K562 (cell line): ENCODE measurements at regions of chr1 and their contacts with region 1.

Region 1: DNA sequence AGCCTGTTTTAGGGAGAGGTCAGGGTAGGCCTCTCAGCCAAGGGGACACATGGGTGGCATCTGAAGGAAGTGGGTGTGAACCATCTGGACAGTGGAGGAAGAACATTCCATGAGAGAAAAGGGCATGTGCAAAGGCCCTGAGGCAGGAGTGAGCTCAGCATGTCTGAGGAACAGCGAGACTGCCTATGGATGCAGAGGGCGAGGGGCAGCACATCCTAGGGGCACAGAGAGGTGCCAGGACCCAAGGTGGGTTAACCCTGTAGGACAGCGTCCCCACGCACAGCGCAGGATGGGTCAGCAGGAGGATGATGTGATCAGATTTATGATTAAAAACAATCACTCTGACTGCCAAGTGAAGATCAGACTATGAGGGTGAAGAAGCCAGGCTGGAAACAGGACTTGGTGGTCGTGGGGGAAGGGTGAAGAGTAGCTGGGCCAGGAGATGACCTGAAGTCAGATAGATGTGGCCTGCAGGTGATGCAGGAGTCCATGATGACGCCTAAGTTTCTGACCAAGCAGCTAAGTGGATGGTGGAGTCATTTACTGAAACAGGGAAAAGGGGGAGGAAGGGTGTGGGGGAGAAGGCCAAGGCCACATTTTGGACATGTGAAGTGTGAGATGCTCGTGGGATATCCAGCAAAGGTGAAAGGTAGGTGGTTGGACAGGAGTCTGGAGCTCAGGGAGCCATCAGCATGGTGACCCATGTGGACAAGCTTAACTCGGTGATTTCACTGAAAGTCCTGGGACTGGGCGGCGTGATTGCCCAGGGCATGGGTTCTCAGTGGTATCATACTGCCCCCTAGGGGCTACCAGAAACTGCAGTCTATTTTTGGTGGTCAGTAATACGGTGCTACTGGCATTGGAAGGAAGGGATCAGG is 37.8 kb downstream of the PABPC4 start:
- DNase-seq: peak; percentile 82 to 89 (median 88)
- ATAC-seq: peak; percentile 99
- H3K4me3 ChIP-seq: no peak overlapping the region
- H3K27ac ChIP-seq: no peak overlapping the region
- H3K4me1 ChIP-seq: no peaks in the 10 kb centered on the region
- H3K27me3 ChIP-seq: no peaks in the 10 kb centered on the region
- CTCF ChIP-seq: peak; percentile 92 to 98 (median 97)
- EP300 ChIP-seq: no peak
- POLR2A ChIP-seq: no peak
- RAD21 ChIP-seq: peak; percentile 81 to 93

Region 2: GRCh38 chr1:39189592-39190041 is 349.2 kb before region 1 on chr1:
- CTCF ChIA-PET with region 1: interaction called, 3 read pairs
- POLR2A ChIA-PET with region 1: no interaction called
- in situ Hi-C with region 1: no loop called
- intact Hi-C with region 1: loop called (anchors 5 kb)
- DNase-seq: peak in 1 of 4 experiments; percentile 22
- ATAC-seq: no peak
- H3K4me3 ChIP-seq: no peak overlapping the region
- H3K27ac ChIP-seq: peak overlapping the region; percentile 56; the same call in 2 of the 3 replicates
- H3K4me1 ChIP-seq: peaks cover 21 to 33% of the 10 kb centered on the region in 2 experiments
- H3K27me3 ChIP-seq: no peaks in the 10 kb centered on the region
- CTCF ChIP-seq: no peak
- EP300 ChIP-seq: peak; percentile 41; the same call in 1 of the 2 replicates
- POLR2A ChIP-seq: no peak
- RAD21 ChIP-seq: peak in 1 of 2 experiments; percentile 21; a peak in 1 of 4 replicates

Region 3: GRCh38 chr1:39268112-39268581 is 270.7 kb before region 1 on chr1:
- CTCF ChIA-PET with region 1: interaction called, 6 read pairs
- POLR2A ChIA-PET with region 1: interaction called, 3 read pairs
- in situ Hi-C with region 1: loop called (anchors 10 kb)
- intact Hi-C with region 1: loop called (anchors 2 kb)
- DNase-seq: no peak
- ATAC-seq: no peak
- H3K4me3 ChIP-seq: no peak overlapping the region
- H3K27ac ChIP-seq: no peak overlapping the region
- H3K4me1 ChIP-seq: peaks cover 15 to 34% of the 10 kb centered on the region in 2 experiments
- H3K27me3 ChIP-seq: no peaks in the 10 kb centered on the region
- CTCF ChIP-seq: no peak
- EP300 ChIP-seq: no peak
- POLR2A ChIP-seq: no peak
- RAD21 ChIP-seq: no peak

Region 4: DNA sequence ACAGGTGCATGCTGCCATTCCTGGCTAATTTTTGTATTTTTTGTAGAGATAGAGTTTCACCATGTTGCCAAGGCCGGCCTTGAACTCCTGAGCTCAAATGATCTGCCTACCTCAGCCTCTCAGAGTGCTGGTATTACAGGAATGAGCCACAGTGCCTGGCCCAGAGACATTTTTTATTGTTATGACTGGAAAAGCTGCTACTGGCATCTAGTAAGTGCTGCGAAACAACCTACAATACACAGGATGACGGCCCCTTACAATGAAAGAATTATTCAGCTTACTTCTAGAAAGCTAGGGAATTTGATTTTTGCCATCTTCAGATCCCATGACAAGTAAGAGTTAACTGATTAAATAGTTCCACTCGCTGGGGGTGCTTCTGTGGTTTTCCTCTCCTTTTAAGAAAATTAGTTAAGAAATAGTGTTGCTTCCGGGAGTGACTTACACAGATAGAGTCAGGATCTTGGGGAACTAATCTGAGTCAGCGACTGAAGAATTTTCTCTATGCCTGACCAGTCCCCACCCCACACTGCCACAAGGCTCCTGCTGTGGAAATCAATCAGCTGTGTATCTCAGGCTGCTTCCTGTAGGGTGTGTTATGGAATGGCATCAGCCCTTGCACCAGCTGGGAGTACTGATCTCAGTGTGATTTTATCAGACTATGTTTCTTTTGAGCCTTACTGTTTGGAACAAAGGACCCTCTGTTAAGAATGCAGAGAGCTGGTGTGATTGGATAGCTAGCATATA is 140.4 kb before region 1 on chr1:
- CTCF ChIA-PET with region 1: no interaction called
- POLR2A ChIA-PET with region 1: no interaction called
- in situ Hi-C with region 1: no loop called
- intact Hi-C with region 1: no loop called
- DNase-seq: peak; percentile 70 to 85 (median 76)
- ATAC-seq: peak; percentile 90
- H3K4me3 ChIP-seq: no peak overlapping the region
- H3K27ac ChIP-seq: peak overlapping the region; percentile 70; the same call in 2 of the 3 replicates
- H3K4me1 ChIP-seq: peaks cover 19 to 54% of the 10 kb centered on the region in 2 experiments
- H3K27me3 ChIP-seq: no peaks in the 10 kb centered on the region
- CTCF ChIP-seq: peak in 1 of 3 experiments; percentile 15; a peak in 1 of 6 replicates
- EP300 ChIP-seq: peak; percentile 84
- POLR2A ChIP-seq: no peak
- RAD21 ChIP-seq: no peak; a peak in 2 of 4 replicates

Region 5: DNA sequence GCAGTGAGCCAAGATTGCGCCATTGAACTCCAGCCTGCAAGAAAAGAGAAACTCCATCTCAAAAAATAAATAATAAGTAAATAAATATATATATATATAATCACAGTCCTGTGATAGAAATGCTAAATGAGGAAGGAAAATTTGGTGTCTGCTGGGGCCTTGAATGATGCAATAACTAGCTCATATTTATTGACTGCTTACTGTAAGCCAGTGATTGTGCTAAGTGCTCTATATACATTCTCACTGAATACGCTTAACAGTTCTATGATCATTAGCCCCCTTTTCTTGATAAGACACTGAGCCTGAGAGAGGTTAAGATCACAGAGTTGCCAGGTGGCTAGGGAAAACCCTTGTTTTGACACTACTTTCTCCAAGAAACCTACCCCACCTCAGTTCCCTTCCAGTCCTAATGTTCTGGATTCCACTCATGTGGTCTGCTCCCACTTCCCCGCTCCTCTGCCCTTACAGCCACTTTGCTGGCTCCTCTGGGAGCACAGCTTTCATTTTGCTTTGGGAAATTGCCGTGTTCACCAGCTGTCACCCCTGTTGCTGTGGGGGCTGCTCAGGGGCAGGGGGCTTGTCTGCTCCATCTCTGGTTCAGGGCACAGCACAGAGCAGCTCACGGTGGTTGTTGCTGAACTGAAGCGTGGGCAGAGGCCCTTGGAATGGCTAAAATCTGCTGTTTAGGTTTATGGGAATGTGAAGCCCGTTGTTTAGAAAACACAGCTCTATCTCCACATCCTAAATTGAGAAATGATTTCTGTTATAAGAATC is 49.8 kb before region 1 on chr1:
- CTCF ChIA-PET with region 1: no interaction called
- POLR2A ChIA-PET with region 1: no interaction called
- in situ Hi-C with region 1: loop called (anchors 5 kb)
- intact Hi-C with region 1: no loop called
- DNase-seq: no peak
- ATAC-seq: no peak
- H3K4me3 ChIP-seq: no peak overlapping the region
- H3K27ac ChIP-seq: no peak overlapping the region
- H3K4me1 ChIP-seq: peaks cover 0 to 24% of the 10 kb centered on the region in 2 experiments; a peak in 2 of 5 replicates
- H3K27me3 ChIP-seq: peaks cover 4 to 17% of the 10 kb centered on the region in 2 experiments
- CTCF ChIP-seq: no peak
- EP300 ChIP-seq: no peak
- POLR2A ChIP-seq: no peak
- RAD21 ChIP-seq: no peak

Region 6: DNA sequence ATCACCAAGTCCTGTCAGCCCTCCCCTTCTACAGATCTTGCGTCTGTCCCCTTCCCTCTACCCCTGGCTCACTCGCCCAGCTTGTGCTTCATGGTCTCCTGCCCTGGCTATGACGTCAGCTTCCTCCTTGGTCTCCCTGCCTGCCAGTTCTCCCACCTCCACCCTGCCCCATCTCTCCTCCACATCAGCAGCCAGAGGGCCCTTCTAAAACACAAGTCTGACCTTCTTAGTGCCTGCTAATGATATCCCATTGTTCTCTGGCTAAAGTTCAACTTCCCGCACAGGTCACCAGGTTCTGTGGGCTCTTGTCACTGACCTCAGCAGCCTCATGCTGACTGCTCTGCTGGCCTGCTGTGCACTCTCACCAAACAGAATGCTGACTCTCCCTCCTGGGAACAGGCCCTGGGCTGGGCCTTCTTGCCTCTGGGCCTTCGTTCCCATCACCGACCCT is 387.5 kb after region 1 on chr1:
- CTCF ChIA-PET with region 1: no interaction called
- POLR2A ChIA-PET with region 1: no interaction called
- in situ Hi-C with region 1: no loop called
- intact Hi-C with region 1: no loop called
- DNase-seq: peak in 1 of 4 experiments; percentile 38
- ATAC-seq: peak; percentile 54
- H3K4me3 ChIP-seq: no peak overlapping the region
- H3K27ac ChIP-seq: no peak overlapping the region
- H3K4me1 ChIP-seq: peaks cover 0 to 5% of the 10 kb centered on the region in 2 experiments; a peak in 2 of 5 replicates
- H3K27me3 ChIP-seq: peaks cover 21 to 61% of the 10 kb centered on the region in 2 experiments; a peak in 4 of 5 replicates
- CTCF ChIP-seq: no peak
- EP300 ChIP-seq: no peak
- POLR2A ChIP-seq: no peak
- RAD21 ChIP-seq: no peak